ENCODE measurements at regions of chr9 and their contacts with region 1.

Region 1: GRCh38 chr9:128034821-128035764 is 32.0 kb downstream of the NAIF1 start:
- DNase-seq: peak; percentile 80
- ATAC-seq: peak; percentile 70
- H3K4me3 Mint-ChIP-seq: no peak overlapping the region
- H3K27ac Mint-ChIP-seq: peak overlapping the region; percentile 77
- H3K4me1 Mint-ChIP-seq: peaks cover 42% of the 10 kb centered on the region
- H3K27me3 Mint-ChIP-seq: no peaks in the 10 kb centered on the region

Region 2: DNA sequence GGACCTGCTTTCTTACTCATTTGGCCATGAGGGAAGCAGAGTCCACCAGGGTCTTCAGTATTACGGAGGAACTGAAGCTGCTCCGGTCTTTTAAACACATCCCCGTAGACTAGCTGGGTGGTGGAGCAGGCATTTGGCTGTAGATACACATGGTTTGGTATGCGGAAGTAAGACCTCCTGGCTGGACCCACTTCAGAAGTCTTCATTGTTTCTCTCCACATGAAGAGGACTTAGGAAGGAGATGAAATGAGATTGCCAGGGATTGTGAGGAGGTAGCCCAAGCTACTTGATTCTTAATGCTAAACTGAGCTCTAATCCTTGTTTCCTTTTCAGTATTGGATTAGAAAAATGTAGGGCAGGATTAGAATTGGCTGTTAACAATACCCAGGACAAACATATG is 390.1 kb before region 1 on chr9:
- CTCF ChIA-PET with region 1: no interaction called
- POLR2A ChIA-PET with region 1: no interaction called
- DNase-seq: no peak
- ATAC-seq: no peak
- H3K4me3 Mint-ChIP-seq: no peak overlapping the region
- H3K27ac Mint-ChIP-seq: no peak overlapping the region
- H3K4me1 Mint-ChIP-seq: no peaks in the 10 kb centered on the region
- H3K27me3 Mint-ChIP-seq: peaks cover 2% of the 10 kb centered on the region

Region 3: DNA sequence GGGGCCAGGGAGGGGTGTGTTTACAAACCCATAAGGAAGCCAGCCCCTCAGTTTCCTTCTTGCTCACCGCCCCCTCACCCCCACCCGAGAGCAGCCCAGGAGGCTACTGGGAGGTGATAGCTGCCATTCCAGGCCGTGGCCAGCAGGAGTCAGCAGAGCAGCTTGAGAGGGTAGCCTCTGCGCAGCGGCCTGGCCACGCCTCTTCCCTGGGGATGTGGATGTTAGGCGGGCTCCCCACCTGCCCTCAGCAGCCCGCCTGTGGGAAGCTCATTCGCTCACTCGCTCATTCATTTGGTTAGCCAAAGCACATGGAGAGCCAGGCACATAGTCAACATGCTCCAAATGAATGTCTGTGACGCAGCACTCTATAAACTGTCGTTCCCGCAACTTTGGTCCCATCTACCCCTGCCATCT is 91.4 kb before region 1 on chr9:
- CTCF ChIA-PET with region 1: interaction called, 140 read pairs
- POLR2A ChIA-PET with region 1: interaction called, 4 read pairs
- DNase-seq: peak; percentile 84
- ATAC-seq: peak; percentile 88
- H3K4me3 Mint-ChIP-seq: peak overlapping the region; percentile 22
- H3K27ac Mint-ChIP-seq: peak overlapping the region; percentile 66
- H3K4me1 Mint-ChIP-seq: peaks cover 44% of the 10 kb centered on the region
- H3K27me3 Mint-ChIP-seq: no peaks in the 10 kb centered on the region

Region 4: GRCh38 chr9:127963359-127964064 is 71.6 kb before region 1 on chr9:
- CTCF ChIA-PET with region 1: interaction called, 158 read pairs
- POLR2A ChIA-PET with region 1: interaction called, 3 read pairs
- DNase-seq: no peak
- ATAC-seq: no peak
- H3K4me3 Mint-ChIP-seq: no peak overlapping the region
- H3K27ac Mint-ChIP-seq: peak overlapping the region; percentile 63
- H3K4me1 Mint-ChIP-seq: peaks cover 98% of the 10 kb centered on the region
- H3K27me3 Mint-ChIP-seq: no peaks in the 10 kb centered on the region

Region 5: GRCh38 chr9:128007566-128008138 is 27.4 kb before region 1 on chr9:
- CTCF ChIA-PET with region 1: interaction called, 12 read pairs
- POLR2A ChIA-PET with region 1: interaction called, 8 read pairs
- DNase-seq: peak; percentile 90
- ATAC-seq: peak; percentile 89
- H3K4me3 Mint-ChIP-seq: peak overlapping the region; percentile 61
- H3K27ac Mint-ChIP-seq: peak overlapping the region; percentile 90
- H3K4me1 Mint-ChIP-seq: peaks cover 53% of the 10 kb centered on the region
- H3K27me3 Mint-ChIP-seq: no peaks in the 10 kb centered on the region

Region 6: GRCh38 chr9:128067876-128068613 is 33.0 kb after region 1 on chr9 and contains the start of gene SLC25A25:
- CTCF ChIA-PET with region 1: interaction called, 12 read pairs
- POLR2A ChIA-PET with region 1: interaction called, 7 read pairs
- DNase-seq: peak; percentile 100
- ATAC-seq: peak; percentile 82
- H3K4me3 Mint-ChIP-seq: peak within 1 kb of the TSS; percentile 99
- H3K27ac Mint-ChIP-seq: peak within 1 kb of the TSS; percentile 90
- H3K4me1 Mint-ChIP-seq: peaks cover 50% of the 10 kb centered on the region
- H3K27me3 Mint-ChIP-seq: no peaks in the 10 kb centered on the region
- total RNA-seq, gene SLC25A25: 17.2 to 19.2 TPM

Region 7: GRCh38 chr9:128117613-128118471 is 82.7 kb after region 1 on chr9:
- CTCF ChIA-PET with region 1: interaction called, 10 read pairs
- POLR2A ChIA-PET with region 1: no interaction called
- DNase-seq: peak; percentile 98
- ATAC-seq: peak; percentile 90
- H3K4me3 Mint-ChIP-seq: no peak overlapping the region
- H3K27ac Mint-ChIP-seq: no peak overlapping the region
- H3K4me1 Mint-ChIP-seq: peaks cover 10% of the 10 kb centered on the region
- H3K27me3 Mint-ChIP-seq: no peaks in the 10 kb centered on the region

Region 8: DNA sequence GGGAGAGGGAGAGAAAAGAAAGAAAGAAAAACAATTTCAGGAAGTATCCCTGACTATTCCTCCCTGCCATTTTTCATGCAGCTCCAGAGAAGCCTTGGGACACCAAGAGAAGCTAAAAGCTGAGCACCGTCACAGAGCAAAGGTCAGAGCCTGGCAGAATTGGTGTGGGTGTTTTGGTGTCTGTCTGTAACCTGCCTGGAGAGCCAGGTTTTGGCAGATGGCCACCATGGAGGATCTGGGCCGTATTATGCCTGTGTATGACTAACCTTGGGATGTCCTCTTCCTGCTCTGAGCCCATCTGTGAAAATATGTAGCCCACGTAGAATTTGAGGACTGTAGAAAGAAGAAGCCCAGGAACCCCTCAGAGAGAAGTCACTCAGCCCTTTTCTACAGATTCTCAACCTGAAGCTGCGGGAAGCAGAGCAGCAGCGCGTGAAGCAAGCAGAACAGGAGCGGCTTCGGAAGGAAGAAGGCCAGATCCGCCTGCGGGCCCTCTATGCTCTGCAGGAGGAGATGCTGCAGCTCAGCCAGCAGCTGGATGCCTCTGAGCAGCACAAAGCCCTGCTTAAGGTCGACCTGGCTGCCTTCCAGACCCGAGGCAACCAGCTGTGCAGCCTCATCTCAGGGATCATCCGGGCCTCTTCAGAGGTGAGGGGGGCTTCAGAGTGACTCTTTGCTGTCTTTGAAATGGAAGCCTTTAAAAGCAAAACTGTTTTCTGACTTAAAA is 488.3 kb after region 1 on chr9:
- CTCF ChIA-PET with region 1: no interaction called
- POLR2A ChIA-PET with region 1: no interaction called
- DNase-seq: no peak
- ATAC-seq: no peak
- H3K4me3 Mint-ChIP-seq: no peak overlapping the region
- H3K27ac Mint-ChIP-seq: no peak overlapping the region
- H3K4me1 Mint-ChIP-seq: no peaks in the 10 kb centered on the region
- H3K27me3 Mint-ChIP-seq: no peaks in the 10 kb centered on the region

Measured in activated CD8-positive, alpha-beta T cell treated with anti-CD3 and anti-CD28 coated beads, Interleukin-2, amount 10 ng/mL, durations not matched to agents 7 days and 5 days (primary cell).